ENCODE measurements at regions of chr1 and their contacts with region 1.

Region 1: DNA sequence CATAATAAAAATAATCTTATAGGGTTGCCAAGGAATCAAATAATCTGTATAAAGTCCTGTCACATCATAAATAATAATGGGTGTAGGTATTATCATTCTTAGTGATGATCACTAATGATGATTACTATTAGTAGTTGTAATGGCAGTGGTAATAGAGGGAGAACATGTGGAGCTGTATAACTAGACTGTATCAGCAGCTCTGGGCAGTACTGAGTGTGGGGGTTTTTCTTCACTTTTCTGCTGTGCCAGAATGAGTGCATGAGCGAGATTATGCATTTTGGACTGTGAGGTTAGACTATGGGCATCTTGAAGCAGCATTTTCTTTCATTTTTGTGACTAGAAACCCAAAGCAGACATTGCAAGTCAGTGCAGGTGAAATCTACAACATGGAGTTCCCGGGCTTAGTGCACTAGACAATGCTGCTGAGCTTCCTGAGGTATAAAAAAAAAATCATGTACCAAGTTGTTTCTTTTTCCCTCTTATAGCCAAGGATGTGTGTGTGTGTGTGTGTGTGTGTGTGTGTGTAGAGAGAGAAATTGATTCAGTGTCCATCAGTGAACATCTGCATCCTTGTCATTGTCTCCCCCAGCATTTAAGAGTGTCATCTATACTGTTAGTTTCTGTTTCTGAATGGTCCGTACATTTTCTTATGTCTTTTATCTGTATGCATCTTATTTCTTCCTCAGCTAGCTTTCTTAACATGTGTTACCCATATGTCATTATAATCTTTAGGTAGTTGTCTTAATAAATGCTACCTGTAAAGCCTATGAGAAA is 86.6 kb downstream of the GIPC2 start:
- DNase-seq: no peak
- ATAC-seq: no peak
- H3K4me3 ChIP-seq: no peak overlapping the region
- H3K4me3 Mint-ChIP-seq: no peak overlapping the region
- H3K27ac ChIP-seq: no peak overlapping the region
- H3K27ac Mint-ChIP-seq: no peak overlapping the region
- H3K4me1 ChIP-seq: no peaks in the 10 kb centered on the region
- H3K4me1 Mint-ChIP-seq: no peaks in the 10 kb centered on the region
- H3K27me3 ChIP-seq: no peaks in the 10 kb centered on the region
- H3K27me3 Mint-ChIP-seq: no peaks in the 10 kb centered on the region
- CTCF ChIP-seq: no peak

Region 2: DNA sequence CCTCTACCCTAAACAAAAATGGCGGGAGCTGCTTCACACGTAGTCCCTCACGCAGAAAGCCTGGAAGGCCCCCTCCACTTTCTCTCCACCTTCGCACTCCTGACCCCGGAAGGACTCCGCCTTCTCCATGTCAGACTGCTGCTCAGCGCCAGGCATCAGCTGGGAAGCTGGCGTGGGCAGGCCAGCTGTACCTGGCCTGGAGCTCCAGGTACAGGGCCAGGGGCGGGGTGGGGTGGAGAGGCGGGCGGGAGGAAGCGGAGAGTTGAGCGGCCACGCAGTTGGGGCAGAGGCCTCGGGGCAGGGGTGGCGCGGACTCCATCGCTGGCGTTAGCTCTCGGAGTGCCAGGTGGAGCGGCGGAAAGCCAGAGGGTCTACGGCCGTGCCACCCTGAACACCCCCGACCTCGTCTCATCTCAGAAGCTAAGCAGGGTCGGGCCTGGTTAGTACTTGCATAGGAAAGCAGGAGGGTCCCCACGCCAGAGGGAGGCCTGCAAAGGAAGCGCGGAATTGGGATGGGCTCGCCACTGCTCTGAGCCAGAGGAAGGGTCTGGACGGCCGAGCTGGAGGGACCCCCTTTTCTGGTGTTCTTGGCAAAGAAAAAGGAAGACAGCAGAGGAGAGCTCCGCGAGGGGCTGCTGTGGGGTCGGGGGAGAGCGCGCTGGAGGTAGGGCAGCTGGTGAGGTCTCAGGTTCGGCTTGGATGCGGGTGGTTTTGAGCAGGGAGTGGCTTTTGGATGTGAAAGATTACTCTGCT is 352.7 kb before region 1 on chr1 and contains the start of gene MIGA1:
- CTCF ChIA-PET with region 1: no interaction called
- POLR2A ChIA-PET with region 1: no interaction called
- intact Hi-C with region 1: no loop called
- DNase-seq: peak; percentile 92
- ATAC-seq: peak; percentile 97
- H3K4me3 ChIP-seq: peak within 1 kb of the TSS; percentile 57 to 95 (median 83)
- H3K4me3 Mint-ChIP-seq: peak within 1 kb of the TSS; percentile 94
- H3K27ac ChIP-seq: peak within 1 kb of the TSS; percentile 45 to 85
- H3K27ac Mint-ChIP-seq: peak within 1 kb of the TSS; percentile 89
- H3K4me1 ChIP-seq: peaks cover 9 to 11% of the 10 kb centered on the region in 2 donors
- H3K4me1 Mint-ChIP-seq: peaks cover 28% of the 10 kb centered on the region
- H3K27me3 ChIP-seq: peaks cover 0 to 1% (median 0%) of the 10 kb centered on the region in 4 experiments
- H3K27me3 Mint-ChIP-seq: peaks cover 2% of the 10 kb centered on the region
- CTCF ChIP-seq: no peak
- total RNA-seq, gene MIGA1: 18.0 and 20.9 TPM in 2 replicates

Region 3: GRCh38 chr1:77910116-77910515 is 222.2 kb before region 1 on chr1:
- CTCF ChIA-PET with region 1: no interaction called
- POLR2A ChIA-PET with region 1: no interaction called
- intact Hi-C with region 1: no loop called
- DNase-seq: no peak
- ATAC-seq: no peak
- H3K4me3 ChIP-seq: no peak overlapping the region
- H3K4me3 Mint-ChIP-seq: no peak overlapping the region
- H3K27ac ChIP-seq: no peak overlapping the region
- H3K27ac Mint-ChIP-seq: no peak overlapping the region
- H3K4me1 ChIP-seq: no peaks in the 10 kb centered on the region
- H3K4me1 Mint-ChIP-seq: no peaks in the 10 kb centered on the region
- H3K27me3 ChIP-seq: no peaks in the 10 kb centered on the region
- H3K27me3 Mint-ChIP-seq: peaks cover 6% of the 10 kb centered on the region
- CTCF ChIP-seq: no peak

Region 4: GRCh38 chr1:78145105-78145580 is 12.8 kb after region 1 on chr1:
- CTCF ChIA-PET with region 1: interaction called, 34 read pairs
- POLR2A ChIA-PET with region 1: no interaction called
- intact Hi-C with region 1: no loop called
- DNase-seq: peak; percentile 59
- ATAC-seq: peak; percentile 50
- H3K4me3 ChIP-seq: no peak overlapping the region
- H3K4me3 Mint-ChIP-seq: no peak overlapping the region
- H3K27ac ChIP-seq: no peak overlapping the region
- H3K27ac Mint-ChIP-seq: no peak overlapping the region
- H3K4me1 ChIP-seq: peaks cover 17 to 22% of the 10 kb centered on the region in 2 donors
- H3K4me1 Mint-ChIP-seq: peaks cover 28% of the 10 kb centered on the region
- H3K27me3 ChIP-seq: no peaks in the 10 kb centered on the region
- H3K27me3 Mint-ChIP-seq: peaks cover 17% of the 10 kb centered on the region
- CTCF ChIP-seq: peak; percentile 95

Region 5: DNA sequence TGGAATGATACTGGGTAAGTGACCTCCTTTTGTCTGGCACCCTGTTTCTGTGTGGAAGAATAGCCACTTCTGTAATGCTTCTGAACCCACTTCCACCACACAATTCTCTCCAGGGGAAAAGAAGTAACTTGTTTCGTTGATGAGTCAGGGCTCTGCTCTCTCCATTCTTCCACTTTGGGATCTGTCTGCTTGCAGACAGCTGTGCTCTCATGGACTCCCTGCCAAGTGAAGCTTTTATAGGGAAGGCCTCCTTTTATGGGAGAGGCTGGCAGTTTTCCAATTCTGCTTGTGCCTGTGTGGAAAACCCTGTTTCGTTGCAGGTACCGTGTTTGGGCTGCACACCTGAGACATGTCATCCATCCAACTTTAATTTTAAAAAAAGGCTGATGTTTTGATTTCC is 44.1 kb after region 1 on chr1:
- CTCF ChIA-PET with region 1: no interaction called
- POLR2A ChIA-PET with region 1: no interaction called
- intact Hi-C with region 1: no loop called
- DNase-seq: no peak
- ATAC-seq: no peak
- H3K4me3 ChIP-seq: no peak overlapping the region
- H3K4me3 Mint-ChIP-seq: no peak overlapping the region
- H3K27ac ChIP-seq: no peak overlapping the region
- H3K27ac Mint-ChIP-seq: no peak overlapping the region
- H3K4me1 ChIP-seq: no peaks in the 10 kb centered on the region
- H3K4me1 Mint-ChIP-seq: no peaks in the 10 kb centered on the region
- H3K27me3 ChIP-seq: no peaks in the 10 kb centered on the region
- H3K27me3 Mint-ChIP-seq: peaks cover 11% of the 10 kb centered on the region
- CTCF ChIP-seq: no peak

Region 6: GRCh38 chr1:78607334-78607927 is 475.1 kb after region 1 on chr1:
- CTCF ChIA-PET with region 1: interaction called, 19 read pairs
- POLR2A ChIA-PET with region 1: no interaction called
- intact Hi-C with region 1: loop called (anchors 2 kb)
- DNase-seq: no peak
- ATAC-seq: no peak
- H3K4me3 ChIP-seq: no peak overlapping the region
- H3K4me3 Mint-ChIP-seq: no peak overlapping the region
- H3K27ac ChIP-seq: no peak overlapping the region
- H3K27ac Mint-ChIP-seq: no peak overlapping the region
- H3K4me1 ChIP-seq: no peaks in the 10 kb centered on the region
- H3K4me1 Mint-ChIP-seq: no peaks in the 10 kb centered on the region
- H3K27me3 ChIP-seq: no peaks in the 10 kb centered on the region
- H3K27me3 Mint-ChIP-seq: peaks cover 3% of the 10 kb centered on the region
- CTCF ChIP-seq: no peak

Measured in B cell (primary cell).